AG04450 (cell line): ENCODE measurements at regions of chr2 and their contacts with region 1.

Region 1: DNA sequence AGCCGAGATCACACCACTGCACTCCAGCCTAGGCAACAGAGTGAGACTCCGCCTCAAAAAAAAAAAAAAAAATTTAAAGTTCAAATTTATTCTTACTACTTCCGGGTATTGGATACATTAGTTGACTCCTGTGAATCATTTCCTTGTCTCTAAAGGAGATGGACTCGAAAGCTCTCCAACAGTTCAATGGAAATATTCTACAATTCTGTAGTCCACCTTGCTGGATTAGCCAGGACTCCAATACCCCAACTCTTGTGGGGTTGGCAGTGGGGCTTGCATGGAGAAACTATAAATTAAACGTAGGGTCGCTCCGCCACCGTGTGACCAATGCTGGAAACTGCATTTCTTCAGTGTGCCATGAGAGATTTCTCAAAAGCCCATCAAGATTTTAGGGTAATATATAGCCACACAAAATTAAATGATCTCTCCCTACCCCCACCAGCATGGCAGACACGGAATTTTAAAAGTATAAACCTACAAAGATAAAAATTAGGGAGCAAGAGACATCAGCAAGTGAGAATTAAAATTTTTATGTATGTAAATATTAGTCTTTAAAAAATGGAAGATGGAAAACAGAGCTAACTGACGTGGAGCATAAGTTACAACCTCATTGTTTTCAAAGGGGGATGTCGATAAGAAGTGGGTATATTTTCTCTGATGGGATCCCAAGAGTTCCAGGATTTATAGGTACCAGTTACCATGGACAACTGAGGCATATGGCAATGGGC is 27.8 kb upstream of the GAREM2 start:
- DNase-seq: peak; percentile 7
- H3K4me3 ChIP-seq: no peak overlapping the region
- H3K27ac ChIP-seq: no peak overlapping the region
- H3K27me3 ChIP-seq: no peaks in the 10 kb centered on the region
- CTCF ChIP-seq: peak; percentile 80

Region 2: GRCh38 chr2:25960920-25961319 is 184.2 kb before region 1 on chr2:
- CTCF ChIA-PET with region 1: interaction called, 21 read pairs
- POLR2A ChIA-PET with region 1: no interaction called
- DNase-seq: no peak
- H3K4me3 ChIP-seq: no peak overlapping the region
- H3K27ac ChIP-seq: no peak overlapping the region
- H3K27me3 ChIP-seq: no peaks in the 10 kb centered on the region
- CTCF ChIP-seq: no peak

Region 3: GRCh38 chr2:25972049-25972823 is 172.9 kb before region 1 on chr2:
- CTCF ChIA-PET with region 1: interaction called, 10 read pairs
- POLR2A ChIA-PET with region 1: no interaction called
- DNase-seq: no peak
- H3K4me3 ChIP-seq: no peak overlapping the region
- H3K27ac ChIP-seq: no peak overlapping the region
- H3K27me3 ChIP-seq: no peaks in the 10 kb centered on the region
- CTCF ChIP-seq: no peak

Region 4: DNA sequence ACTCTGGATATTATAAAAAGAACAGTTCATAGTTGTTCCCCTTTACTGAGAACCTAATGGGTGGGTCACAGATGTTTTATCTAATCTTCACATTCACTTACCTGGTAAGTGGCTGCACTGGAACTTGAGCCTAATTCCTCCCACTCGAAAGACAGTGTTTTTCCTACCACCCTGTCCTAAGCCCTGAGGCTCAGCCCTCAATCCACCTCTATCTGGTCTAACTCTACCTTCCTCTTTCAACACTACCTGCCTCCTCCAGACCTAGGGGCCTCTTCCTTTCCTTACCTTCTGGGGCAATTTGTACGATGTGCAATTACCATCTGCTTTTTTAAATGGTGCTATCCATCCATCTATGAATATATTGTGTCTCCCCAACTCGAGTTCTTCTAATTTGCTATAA is 153.2 kb before region 1 on chr2:
- CTCF ChIA-PET with region 1: interaction called, 59 read pairs
- POLR2A ChIA-PET with region 1: no interaction called
- DNase-seq: no peak
- H3K4me3 ChIP-seq: no peak overlapping the region
- H3K27ac ChIP-seq: no peak overlapping the region
- H3K27me3 ChIP-seq: no peaks in the 10 kb centered on the region
- CTCF ChIP-seq: no peak

Region 5: DNA sequence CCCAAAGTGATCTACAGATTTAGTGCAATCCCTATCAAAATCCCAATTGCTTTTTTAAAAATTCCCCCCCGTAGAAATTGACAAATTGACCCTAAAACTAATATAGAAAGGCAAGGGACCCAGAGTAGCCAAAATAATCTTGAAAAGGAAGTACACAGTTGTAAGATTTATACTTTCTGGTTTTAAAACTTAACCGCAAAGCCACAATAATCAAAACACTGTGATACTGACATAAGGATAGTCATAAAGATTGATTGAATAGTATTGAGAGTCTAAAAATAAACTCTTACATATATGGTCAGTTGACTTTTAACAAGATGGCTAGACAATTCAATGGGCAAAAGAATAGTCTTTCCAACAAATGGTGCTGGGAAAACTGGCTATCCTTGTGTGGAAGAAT is 31.0 kb before region 1 on chr2:
- CTCF ChIA-PET with region 1: no interaction called
- POLR2A ChIA-PET with region 1: no interaction called
- DNase-seq: no peak
- H3K4me3 ChIP-seq: no peak overlapping the region
- H3K27ac ChIP-seq: no peak overlapping the region
- H3K27me3 ChIP-seq: no peaks in the 10 kb centered on the region
- CTCF ChIP-seq: no peak

Region 6: GRCh38 chr2:26178746-26179436 is 33.8 kb after region 1 on chr2:
- CTCF ChIA-PET with region 1: no interaction called
- POLR2A ChIA-PET with region 1: no interaction called
- DNase-seq: no peak
- H3K4me3 ChIP-seq: peak overlapping the region; percentile 55
- H3K27ac ChIP-seq: no peak overlapping the region
- H3K27me3 ChIP-seq: peaks cover 20% of the 10 kb centered on the region
- CTCF ChIP-seq: no peak